Kidney (tissue), 22 donors: ENCODE measurements at regions of chr1 and their contacts with region 1.

Region 1: DNA sequence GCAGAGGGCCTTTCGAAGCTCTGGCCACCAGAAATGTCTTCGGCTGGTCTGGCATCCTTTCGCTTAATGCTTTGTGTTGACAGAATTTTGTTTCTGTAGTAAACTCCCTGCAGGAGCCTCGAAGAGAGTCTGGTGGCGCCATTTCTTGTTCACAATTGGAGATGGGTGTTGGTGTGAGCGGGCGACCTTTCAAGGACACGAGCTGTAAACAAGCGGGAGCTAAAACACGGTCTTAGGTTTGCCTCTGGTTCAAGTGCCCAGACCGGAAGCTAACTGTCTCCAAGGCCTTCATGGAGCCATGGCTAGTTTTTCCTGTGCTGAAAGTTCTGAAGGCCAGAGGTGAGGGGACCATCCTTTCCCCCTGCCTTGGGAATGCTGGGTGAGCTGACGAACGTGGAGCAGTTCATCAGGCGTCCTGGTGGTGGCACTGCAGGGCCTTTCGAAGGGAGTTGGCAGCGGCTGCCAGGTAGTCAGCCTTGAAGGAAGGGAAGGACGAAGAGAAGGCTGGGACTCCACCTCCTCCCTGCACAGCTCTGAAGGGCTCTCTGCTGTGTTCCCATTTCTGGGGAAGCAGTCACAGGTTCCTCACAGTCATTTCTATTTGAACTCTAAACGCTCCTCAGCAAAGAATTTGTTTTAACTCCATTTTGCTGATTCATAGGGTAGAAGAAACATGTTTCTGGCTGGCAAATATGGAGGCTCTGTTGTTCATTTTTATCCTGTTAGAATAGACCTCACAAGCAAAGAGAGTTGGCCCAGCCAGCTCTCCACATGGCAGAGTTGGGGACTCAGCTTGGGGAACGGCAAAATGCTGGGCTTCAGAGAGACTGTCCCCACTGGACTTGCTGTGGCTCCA is 35.2 kb downstream of the URB2 start:
- DNase-seq: peak; percentile 80 to 91 (median 84)
- H3K4me3 ChIP-seq: no peak overlapping the region
- H3K27ac ChIP-seq: no peak overlapping the region
- H3K4me1 ChIP-seq: no peaks in the 10 kb centered on the region
- H3K27me3 ChIP-seq: no peaks in the 10 kb centered on the region
- CTCF ChIP-seq: peak; percentile 90

Region 2: DNA sequence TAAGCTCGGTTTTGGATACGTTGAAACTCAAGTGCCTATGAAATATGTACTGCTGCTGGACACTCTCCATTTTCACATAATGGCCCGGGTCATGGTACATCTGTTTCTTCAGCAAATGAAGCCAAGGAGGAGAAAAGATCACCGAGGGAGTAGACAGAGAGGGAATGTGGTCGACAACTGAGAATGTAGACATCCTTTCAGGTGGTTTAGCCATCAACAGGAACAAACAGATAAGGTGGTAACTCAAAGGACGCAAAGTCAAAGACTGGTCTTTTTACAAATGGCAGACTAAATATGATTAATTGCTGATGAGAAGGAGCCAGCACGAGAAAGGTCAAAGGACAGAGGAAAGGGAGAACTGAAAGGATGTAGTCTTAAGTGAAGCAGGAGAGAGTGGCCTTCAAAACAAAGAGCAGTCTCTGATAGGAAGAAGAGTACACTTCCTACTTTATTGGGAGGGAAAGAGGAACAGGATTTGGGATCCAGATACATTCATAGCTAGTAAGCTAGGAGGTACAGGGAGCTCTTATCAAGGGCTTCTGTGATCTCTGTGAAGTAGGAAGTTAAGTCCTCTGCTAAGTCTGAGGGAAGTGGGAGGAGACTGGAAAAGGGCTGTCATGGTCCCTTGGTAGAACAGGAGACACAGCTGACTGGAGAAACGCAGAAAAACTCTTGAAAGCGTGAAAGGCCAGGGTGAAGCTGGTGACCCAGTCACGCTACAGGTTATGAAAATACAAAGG is 181.4 kb before region 1 on chr1:
- intact Hi-C with region 1: no loop called
- DNase-seq: peak in 1 of 5 donors; percentile 9
- H3K4me3 ChIP-seq: no peak overlapping the region
- H3K27ac ChIP-seq: no peak overlapping the region
- H3K4me1 ChIP-seq: no peaks in the 10 kb centered on the region
- H3K27me3 ChIP-seq: no peaks in the 10 kb centered on the region
- CTCF ChIP-seq: no peak

Region 3: GRCh38 chr1:230186003-230186863 is 525.0 kb after region 1 on chr1:
- intact Hi-C with region 1: no loop called
- DNase-seq: no peak
- H3K4me3 ChIP-seq: no peak overlapping the region
- H3K27ac ChIP-seq: no peak overlapping the region
- H3K4me1 ChIP-seq: no peaks in the 10 kb centered on the region
- H3K27me3 ChIP-seq: no peaks in the 10 kb centered on the region
- CTCF ChIP-seq: no peak

Region 4: GRCh38 chr1:230310381-230311163 is 649.3 kb after region 1 on chr1:
- intact Hi-C with region 1: loop called (anchors 10 kb)
- DNase-seq: peak; percentile 73 to 90 (median 83)
- H3K4me3 ChIP-seq: no peak overlapping the region
- H3K27ac ChIP-seq: no peak overlapping the region
- H3K4me1 ChIP-seq: peaks cover 0 to 2% (median 0%) of the 10 kb centered on the region in 3 donors
- H3K27me3 ChIP-seq: no peaks in the 10 kb centered on the region
- CTCF ChIP-seq: peak; percentile 93

Region 5: DNA sequence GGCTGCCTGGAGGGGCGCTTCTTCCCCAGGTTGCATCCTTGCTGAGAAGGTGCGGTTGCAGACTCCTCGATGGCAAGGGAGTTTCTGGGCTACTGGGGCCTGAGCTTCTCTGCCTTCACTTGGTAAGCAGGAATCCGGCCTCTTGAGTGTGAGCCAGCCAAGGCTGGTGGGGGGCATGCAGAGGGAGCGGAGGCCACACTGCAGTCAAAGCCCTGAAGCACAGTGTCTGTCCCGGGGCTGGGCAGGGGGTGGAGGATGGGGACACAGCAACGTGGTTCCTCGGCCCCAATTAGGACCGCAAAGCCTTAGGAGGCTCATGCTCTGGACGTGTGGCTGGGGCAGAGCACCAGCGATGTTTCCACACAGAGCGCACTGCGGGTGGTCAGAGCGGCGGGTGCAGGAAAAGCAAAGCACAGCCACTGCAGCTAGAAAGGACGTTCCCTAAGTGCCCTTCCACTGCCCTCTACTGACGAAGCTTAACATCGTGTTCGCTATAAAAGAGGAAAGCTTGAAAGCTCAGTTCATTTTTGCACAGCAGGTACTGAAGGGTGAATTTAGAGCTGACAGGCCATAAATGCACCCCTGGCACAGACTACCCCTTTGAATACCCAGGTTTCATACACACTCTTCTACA is 920.3 kb after region 1 on chr1:
- intact Hi-C with region 1: no loop called
- DNase-seq: no peak
- H3K4me3 ChIP-seq: no peak overlapping the region
- H3K27ac ChIP-seq: no peak overlapping the region
- H3K4me1 ChIP-seq: no peaks in the 10 kb centered on the region
- H3K27me3 ChIP-seq: no peaks in the 10 kb centered on the region
- CTCF ChIP-seq: no peak